Right lobe of liver (tissue), 6 donors: ENCODE measurements at regions of chr7 and their contacts with region 1.

Region 1: DNA sequence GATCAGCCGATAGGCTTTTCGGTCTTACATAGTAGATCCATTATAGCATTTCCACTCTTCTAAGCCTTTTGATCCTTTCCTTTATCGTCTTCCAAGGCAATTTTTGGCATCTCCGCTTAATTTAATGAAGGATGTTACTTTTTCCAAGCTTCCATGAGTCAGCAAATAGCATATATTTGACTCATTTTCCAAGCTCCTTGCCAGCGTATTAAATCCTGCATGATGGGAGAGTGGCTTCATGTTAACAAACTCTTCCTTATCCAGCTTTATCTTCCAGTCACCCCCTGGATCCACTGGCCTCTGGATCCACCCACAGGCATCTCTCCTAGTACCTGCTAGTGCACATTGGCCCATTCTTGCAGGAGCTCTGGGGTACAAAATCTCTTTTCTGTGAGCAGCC is 13.0 kb downstream of the OR9A2 start:
- DNase-seq: no peak
- ATAC-seq: no peak
- H3K4me3 ChIP-seq: no peak overlapping the region
- H3K27ac ChIP-seq: no peak overlapping the region
- H3K4me1 ChIP-seq: no peaks in the 10 kb centered on the region
- H3K27me3 ChIP-seq: no peaks in the 10 kb centered on the region
- CTCF ChIP-seq: no peak
- POLR2A ChIP-seq: no peak

Region 2: DNA sequence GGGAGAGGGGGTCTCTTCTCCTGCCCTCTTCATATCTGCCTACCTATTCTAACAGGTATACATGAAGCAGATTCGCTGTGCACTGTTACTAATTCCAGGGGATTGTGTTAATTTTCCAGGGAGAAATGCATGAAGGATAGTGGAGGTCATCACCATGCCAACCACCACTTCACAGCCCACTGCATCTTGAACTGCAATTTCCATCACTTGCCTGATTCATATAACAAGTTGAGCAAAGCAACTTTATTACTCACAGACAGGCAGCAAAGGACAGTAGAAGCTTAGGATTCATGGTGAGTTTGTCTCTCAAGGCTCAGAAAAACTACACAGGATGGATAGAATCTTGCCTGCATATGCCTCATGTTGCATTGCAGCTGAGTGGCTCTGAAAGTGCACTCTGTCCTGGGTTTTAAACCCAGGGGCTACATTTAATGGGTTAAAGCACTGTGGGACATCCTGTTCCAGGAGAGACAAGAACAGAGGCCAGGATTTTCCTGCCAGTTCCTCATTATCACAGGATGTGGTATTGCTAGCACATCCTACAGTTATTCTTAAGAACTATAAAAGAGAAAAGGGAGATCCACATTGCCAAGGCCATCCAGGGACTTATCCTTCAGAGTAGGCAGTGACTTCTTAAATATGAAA is 401.5 kb before region 1 on chr7:
- intact Hi-C with region 1: no loop called
- DNase-seq: no peak
- ATAC-seq: peak in 1 of 4 donors; percentile 44
- H3K4me3 ChIP-seq: no peak overlapping the region
- H3K27ac ChIP-seq: no peak overlapping the region
- H3K4me1 ChIP-seq: no peaks in the 10 kb centered on the region
- H3K27me3 ChIP-seq: no peaks in the 10 kb centered on the region
- CTCF ChIP-seq: no peak
- POLR2A ChIP-seq: no peak

Region 3: GRCh38 chr7:142815134-142815533 is 198.8 kb before region 1 on chr7:
- intact Hi-C with region 1: no loop called
- DNase-seq: no peak
- ATAC-seq: no peak
- H3K4me3 ChIP-seq: no peak overlapping the region
- H3K27ac ChIP-seq: no peak overlapping the region
- H3K4me1 ChIP-seq: no peaks in the 10 kb centered on the region
- H3K27me3 ChIP-seq: no peaks in the 10 kb centered on the region
- CTCF ChIP-seq: no peak
- POLR2A ChIP-seq: no peak

Region 4: DNA sequence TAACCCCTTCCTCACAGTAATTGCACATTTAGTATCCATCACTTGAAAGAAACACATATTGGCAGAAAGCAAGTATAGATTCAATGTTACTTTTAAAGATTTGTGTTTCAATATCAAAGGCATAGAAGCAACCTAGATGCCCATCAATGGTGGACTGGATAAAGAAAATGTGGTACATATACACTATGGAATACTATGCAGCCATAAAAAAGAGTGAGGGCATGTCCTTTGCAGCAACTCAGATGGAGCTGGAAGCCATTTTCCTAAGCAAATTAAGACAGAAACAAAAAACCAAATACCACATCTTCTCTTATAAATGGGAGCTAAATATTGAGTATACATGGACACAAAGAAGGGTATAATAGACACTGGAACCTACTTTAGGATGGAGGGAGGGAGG is 41.9 kb after region 1 on chr7:
- intact Hi-C with region 1: no loop called
- DNase-seq: no peak
- ATAC-seq: no peak
- H3K4me3 ChIP-seq: no peak overlapping the region
- H3K27ac ChIP-seq: no peak overlapping the region
- H3K4me1 ChIP-seq: no peaks in the 10 kb centered on the region
- H3K27me3 ChIP-seq: no peaks in the 10 kb centered on the region
- CTCF ChIP-seq: no peak
- POLR2A ChIP-seq: no peak

Region 5: DNA sequence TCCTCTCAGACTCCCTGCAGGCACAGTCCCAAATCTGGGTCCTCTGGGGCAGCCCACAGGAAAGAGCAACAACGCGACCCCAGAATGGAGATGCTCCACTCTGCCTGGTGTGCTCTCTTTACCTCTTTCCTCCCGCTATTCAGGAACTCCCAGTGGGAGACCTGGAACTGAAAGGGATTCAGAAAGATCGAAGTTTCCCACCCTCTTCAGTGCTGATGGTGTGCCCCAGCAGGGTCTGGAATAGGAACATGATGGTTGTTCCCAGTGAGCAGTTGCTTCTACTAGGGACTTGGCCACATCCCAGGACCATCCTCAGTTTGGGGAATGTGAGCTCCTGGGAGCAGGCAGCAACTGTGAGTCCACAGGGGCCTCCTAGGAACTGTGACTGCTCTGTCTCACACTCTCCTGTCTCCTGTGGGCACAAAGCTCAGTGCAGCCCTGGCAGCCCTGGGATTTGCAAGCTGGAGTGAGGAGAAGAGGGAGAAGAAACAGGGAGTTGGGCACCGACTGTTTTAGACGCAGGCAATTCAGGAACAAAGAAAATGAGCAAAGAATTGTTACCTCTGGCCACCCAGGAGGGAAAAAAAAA is 56.1 kb after region 1 on chr7:
- intact Hi-C with region 1: no loop called
- DNase-seq: no peak
- ATAC-seq: no peak
- H3K4me3 ChIP-seq: no peak overlapping the region
- H3K27ac ChIP-seq: no peak overlapping the region
- H3K4me1 ChIP-seq: no peaks in the 10 kb centered on the region
- H3K27me3 ChIP-seq: no peaks in the 10 kb centered on the region
- CTCF ChIP-seq: no peak
- POLR2A ChIP-seq: no peak

Region 6: DNA sequence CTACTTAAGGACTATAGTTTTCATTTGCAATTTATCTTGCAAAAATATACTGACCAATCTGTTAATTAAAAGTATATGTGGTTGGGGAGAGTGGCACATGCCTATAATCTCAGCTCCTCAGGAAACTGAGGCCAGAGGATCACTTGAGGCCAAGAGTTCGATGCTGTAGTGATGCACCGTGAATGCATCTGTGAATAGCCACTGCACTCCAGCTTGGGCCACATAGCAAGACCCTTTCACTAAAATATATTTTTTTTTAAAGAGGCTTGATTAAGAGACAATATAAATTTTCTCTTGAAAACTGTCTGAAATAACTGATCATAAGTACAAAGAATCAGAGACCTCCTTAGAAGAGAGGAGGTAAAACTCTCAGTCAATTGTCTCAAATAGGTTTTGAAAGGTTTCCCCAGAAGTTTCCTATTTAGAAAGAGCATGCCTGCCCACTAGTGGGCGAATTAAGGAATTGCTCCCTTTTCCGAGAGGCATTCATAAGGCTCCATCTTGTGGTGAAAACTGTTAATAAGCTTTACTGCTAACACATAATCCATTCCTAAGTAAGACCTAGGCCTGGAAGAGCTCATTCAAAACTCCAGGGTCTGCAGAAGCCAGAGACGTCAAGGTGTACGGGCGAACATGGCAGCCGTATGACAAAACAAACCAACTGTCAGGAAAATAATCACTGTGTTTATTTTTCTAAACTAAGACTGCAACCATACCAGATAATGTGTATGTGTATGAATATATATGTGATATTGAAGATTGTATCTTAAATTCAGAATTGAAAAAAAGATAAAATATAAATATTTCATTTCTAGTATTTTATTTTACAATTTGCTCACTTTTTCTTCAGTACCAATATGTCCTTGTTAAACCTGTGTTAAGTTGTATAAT is 201.1 kb after region 1 on chr7:
- intact Hi-C with region 1: loop called (anchors 5 kb)
- DNase-seq: peak in 1 of 3 donors; percentile 60
- ATAC-seq: peak; percentile 97 to 100 (median 100)
- H3K4me3 ChIP-seq: no peak overlapping the region
- H3K27ac ChIP-seq: no peak overlapping the region
- H3K4me1 ChIP-seq: no peaks in the 10 kb centered on the region
- H3K27me3 ChIP-seq: no peaks in the 10 kb centered on the region
- CTCF ChIP-seq: peak; percentile 99 to 100 (median 100)
- POLR2A ChIP-seq: no peak